Endothelial cell of umbilical vein (primary cell): ENCODE measurements at regions of chr20 and their contacts with region 1.

Region 1: GRCh38 chr20:37564388-37565133 is 36.9 kb upstream of the BLCAP start:
- DNase-seq: peak; percentile 35
- H3K4me3 ChIP-seq: no peak overlapping the region
- H3K27ac ChIP-seq: no peak overlapping the region
- H3K4me1 ChIP-seq: no peaks in the 10 kb centered on the region
- H3K27me3 ChIP-seq: peaks cover 14 to 22% of the 10 kb centered on the region in 2 experiments
- CTCF ChIP-seq: peak; percentile 89 to 97
- POLR2A ChIP-seq: no peak

Region 2: DNA sequence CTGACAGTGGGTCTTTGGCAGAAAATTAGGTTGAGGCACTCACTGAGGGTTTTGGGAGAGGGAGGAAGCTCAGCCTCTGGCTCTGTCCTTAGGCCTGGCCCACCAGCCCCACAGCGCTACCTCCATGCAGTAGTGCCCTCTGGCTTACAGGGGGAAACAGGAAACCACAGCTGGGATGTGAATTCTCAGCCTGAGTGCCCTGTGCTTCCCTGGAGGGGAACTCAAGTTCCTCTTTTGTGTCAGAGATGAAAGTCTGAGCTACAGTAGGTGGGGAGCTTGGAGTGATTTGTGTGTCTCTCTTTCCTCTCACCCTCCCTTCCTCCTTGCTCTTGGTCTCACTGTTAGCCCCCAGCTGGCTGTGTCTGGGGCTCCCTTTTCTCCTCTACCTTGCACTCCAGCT is 11.3 kb after region 1 on chr20:
- CTCF ChIA-PET with region 1: interaction called, 17 read pairs
- POLR2A ChIA-PET with region 1: no interaction called
- dilution Hi-C with region 1: no loop called
- intact Hi-C with region 1: no loop called
- DNase-seq: no peak
- H3K4me3 ChIP-seq: no peak overlapping the region
- H3K27ac ChIP-seq: no peak overlapping the region
- H3K4me1 ChIP-seq: no peaks in the 10 kb centered on the region
- H3K27me3 ChIP-seq: no peaks in the 10 kb centered on the region
- CTCF ChIP-seq: no peak
- POLR2A ChIP-seq: no peak

Region 3: DNA sequence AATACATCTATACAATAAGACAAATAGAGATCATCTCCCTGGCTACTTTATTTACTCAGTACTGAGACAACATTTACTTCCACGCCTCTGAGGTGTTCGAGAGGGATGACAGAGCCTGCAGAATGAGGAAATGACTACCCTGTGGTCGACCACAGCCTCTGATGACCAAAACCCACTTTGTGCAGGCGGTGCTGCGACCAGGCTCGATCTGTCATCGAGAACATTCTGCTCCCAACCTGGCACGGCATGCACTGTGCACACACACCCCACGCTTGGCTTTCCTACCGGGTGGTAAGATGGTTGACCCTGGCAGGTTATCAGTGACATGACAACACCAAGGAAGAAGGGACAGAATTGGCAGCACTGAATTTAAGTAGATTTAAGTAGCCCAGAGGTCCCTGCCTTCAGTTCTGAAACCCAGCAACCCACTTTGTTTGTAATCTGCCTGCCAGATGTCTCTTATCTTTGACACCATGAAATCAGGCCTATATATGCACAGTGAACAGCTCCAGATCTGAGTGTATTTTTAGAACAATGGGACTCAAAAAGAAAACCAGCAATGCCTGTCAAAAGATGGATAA is 426.1 kb after region 1 on chr20:
- CTCF ChIA-PET with region 1: interaction called, 37 read pairs
- POLR2A ChIA-PET with region 1: no interaction called
- dilution Hi-C with region 1: no loop called
- intact Hi-C with region 1: loop called (anchors 2 kb)
- DNase-seq: peak; percentile 59
- H3K4me3 ChIP-seq: no peak overlapping the region
- H3K27ac ChIP-seq: peak overlapping the region; percentile 68
- H3K4me1 ChIP-seq: peaks cover 24% of the 10 kb centered on the region
- H3K27me3 ChIP-seq: no peaks in the 10 kb centered on the region
- CTCF ChIP-seq: no peak
- POLR2A ChIP-seq: no peak

Region 4: DNA sequence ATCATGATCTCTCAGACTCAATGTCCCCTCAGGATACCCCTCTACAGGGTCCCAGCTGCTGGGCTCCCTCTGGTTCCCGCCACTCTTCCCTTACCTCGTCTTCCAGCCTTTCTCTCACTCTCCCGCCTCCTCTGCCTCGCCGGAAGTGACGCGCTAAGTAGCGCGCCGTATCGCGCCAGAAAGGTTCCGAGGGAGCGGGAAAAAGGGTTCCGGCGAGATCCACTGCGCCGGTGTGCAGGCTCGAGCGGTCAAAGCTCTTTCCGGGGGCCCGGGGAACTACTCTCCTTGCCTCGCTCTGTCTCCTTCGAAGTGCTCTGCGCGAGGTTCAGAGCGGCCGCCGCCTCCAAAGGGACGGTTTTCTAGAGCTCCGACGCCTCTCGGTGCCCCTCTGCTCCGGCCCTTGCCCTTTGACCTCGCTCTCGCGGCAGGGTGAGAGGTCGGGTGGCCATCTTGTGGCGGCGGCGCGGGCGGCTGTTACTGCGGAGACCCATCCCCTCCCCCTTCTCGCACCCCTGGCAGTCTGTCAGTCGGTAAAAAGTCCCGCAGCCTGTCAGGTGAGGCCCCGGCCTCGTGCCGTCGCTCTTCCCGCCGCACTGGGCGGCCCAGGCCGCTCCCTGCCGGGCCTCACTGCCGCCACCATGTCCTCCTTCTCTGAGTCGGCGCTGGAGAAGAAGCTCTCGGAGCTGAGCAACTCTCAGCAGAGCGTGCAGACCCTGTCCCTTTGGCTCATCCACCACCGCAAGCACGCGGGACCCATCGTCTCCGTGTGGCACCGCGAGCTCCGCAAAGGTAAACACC is 468.9 kb after region 1 on chr20 and contains the starts of genes RPRD1B and TTI1:
- CTCF ChIA-PET with region 1: interaction called, 4 read pairs
- POLR2A ChIA-PET with region 1: no interaction called
- dilution Hi-C with region 1: no loop called
- intact Hi-C with region 1: loop called (anchors 5 kb)
- DNase-seq: peak; percentile 92
- H3K4me3 ChIP-seq: peak within 1 kb of the TSS; percentile 39 to 74 (median 64)
- H3K27ac ChIP-seq: peak within 1 kb of the TSS; percentile 75
- H3K4me1 ChIP-seq: peaks cover 31% of the 10 kb centered on the region
- H3K27me3 ChIP-seq: no peaks in the 10 kb centered on the region
- CTCF ChIP-seq: no peak
- POLR2A ChIP-seq: peak; percentile 78
- total RNA-seq, gene RPRD1B: 24.5 and 29.3 TPM in 2 replicates
- total RNA-seq, gene TTI1: 21.4 and 23.2 TPM in 2 replicates

Region 5: GRCh38 chr20:38187512-38187911 is 623.0 kb after region 1 on chr20:
- CTCF ChIA-PET with region 1: no interaction called
- POLR2A ChIA-PET with region 1: no interaction called
- dilution Hi-C with region 1: no loop called
- intact Hi-C with region 1: no loop called
- DNase-seq: no peak
- H3K4me3 ChIP-seq: no peak overlapping the region
- H3K27ac ChIP-seq: no peak overlapping the region
- H3K4me1 ChIP-seq: peaks cover 17% of the 10 kb centered on the region
- H3K27me3 ChIP-seq: no peaks in the 10 kb centered on the region
- CTCF ChIP-seq: no peak
- POLR2A ChIP-seq: no peak

Region 6: GRCh38 chr20:38304845-38305447 is 740.4 kb after region 1 on chr20:
- CTCF ChIA-PET with region 1: interaction called, 15 read pairs
- POLR2A ChIA-PET with region 1: no interaction called
- dilution Hi-C with region 1: no loop called
- intact Hi-C with region 1: no loop called
- DNase-seq: peak; percentile 30
- H3K4me3 ChIP-seq: no peak overlapping the region
- H3K27ac ChIP-seq: no peak overlapping the region
- H3K4me1 ChIP-seq: no peaks in the 10 kb centered on the region
- H3K27me3 ChIP-seq: peaks cover 2% of the 10 kb centered on the region in 2 experiments
- CTCF ChIP-seq: peak; percentile 40 to 70
- POLR2A ChIP-seq: no peak

Region 7: GRCh38 chr20:38321959-38322598 is 757.5 kb after region 1 on chr20:
- CTCF ChIA-PET with region 1: interaction called, 7 read pairs
- POLR2A ChIA-PET with region 1: no interaction called
- dilution Hi-C with region 1: no loop called
- intact Hi-C with region 1: loop called (anchors 1 kb)
- DNase-seq: peak; percentile 69
- H3K4me3 ChIP-seq: no peak overlapping the region
- H3K27ac ChIP-seq: no peak overlapping the region
- H3K4me1 ChIP-seq: no peaks in the 10 kb centered on the region
- H3K27me3 ChIP-seq: peaks cover 2 to 5% of the 10 kb centered on the region in 2 experiments
- CTCF ChIP-seq: peak; percentile 66 to 69
- POLR2A ChIP-seq: no peak